GM12878 (cell line): ENCODE measurements at regions of chr11 and their contacts with region 1.

Region 1: DNA sequence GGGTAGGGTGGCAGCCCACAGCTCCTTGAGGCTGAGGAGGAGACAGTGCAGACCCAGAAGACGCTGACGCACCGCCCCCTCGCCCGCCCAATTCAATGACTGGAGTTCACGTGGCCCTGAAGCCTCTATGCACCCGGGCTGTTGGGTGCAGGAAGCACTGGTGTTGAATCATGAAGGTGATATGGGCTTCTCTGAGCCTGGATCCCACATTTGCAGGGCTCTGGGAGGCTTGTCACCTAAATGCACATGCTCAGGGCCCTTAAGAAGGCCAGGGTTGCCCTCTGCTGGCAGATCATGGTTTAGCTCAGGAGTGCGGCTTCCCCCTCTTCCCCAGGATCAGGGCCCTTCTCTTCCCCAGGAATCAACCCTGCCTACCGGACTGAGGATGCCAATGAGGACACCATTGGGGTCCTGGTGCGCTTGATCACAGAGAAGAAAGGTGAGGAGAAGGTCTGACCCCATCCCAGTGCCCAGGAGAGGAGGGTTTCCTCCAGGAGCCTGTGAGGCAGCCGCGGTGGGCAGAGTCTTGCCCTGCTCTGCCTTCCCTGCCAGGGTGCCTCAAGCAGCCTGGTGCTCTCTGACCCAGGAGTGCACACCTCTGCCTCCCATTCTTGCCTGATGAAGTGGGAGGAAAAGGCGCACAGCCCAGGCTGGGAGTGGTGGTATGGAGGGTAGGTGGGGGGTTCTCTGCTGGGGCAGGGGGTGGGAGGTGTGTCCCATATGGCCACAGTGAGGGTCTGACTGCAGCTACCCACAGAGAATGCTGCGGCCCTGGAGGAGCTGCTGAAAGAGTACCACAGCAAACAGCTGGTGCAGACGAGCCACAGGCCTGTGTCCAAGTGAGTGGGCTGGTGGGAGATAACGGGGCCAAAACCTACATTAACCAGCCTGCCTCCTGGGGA is 17.5 kb downstream of the RELT start:
- DNase-seq: no peak
- ATAC-seq: peak; percentile 84
- H3K4me3 ChIP-seq: no peak overlapping the region
- H3K27ac ChIP-seq: no peak overlapping the region
- H3K4me1 ChIP-seq: peaks cover 4% of the 10 kb centered on the region
- H3K27me3 ChIP-seq: no peaks in the 10 kb centered on the region
- CTCF ChIP-seq: peak; percentile 83 to 90 (median 88)
- EP300 ChIP-seq: no peak
- POLR2A ChIP-seq: no peak
- RAD21 ChIP-seq: peak; percentile 91

Region 2: GRCh38 chr11:73376160-73376802 is 17.4 kb before region 1 on chr11 and contains the start of gene RELT:
- CTCF ChIA-PET with region 1: interaction called, 17 read pairs
- POLR2A ChIA-PET with region 1: interaction called, 9 read pairs
- RAD21 ChIA-PET with region 1: interaction called, 14 read pairs
- SMC1A ChIA-PET with region 1: interaction called, 7 read pairs
- in situ Hi-C with region 1: no loop called
- intact Hi-C with region 1: loop called (anchors 2 kb)
- DNase-seq: peak; percentile 65
- ATAC-seq: peak; percentile 75
- H3K4me3 ChIP-seq: peak within 1 kb of the TSS; percentile 81
- H3K27ac ChIP-seq: peak within 1 kb of the TSS; percentile 92
- H3K4me1 ChIP-seq: peaks cover 43% of the 10 kb centered on the region
- H3K27me3 ChIP-seq: no peaks in the 10 kb centered on the region
- CTCF ChIP-seq: peak; percentile 88 to 95 (median 90)
- EP300 ChIP-seq: no peak
- POLR2A ChIP-seq: no peak
- RAD21 ChIP-seq: peak; percentile 54
- polyA plus RNA-seq, gene RELT: 1.2 to 3.0 TPM